GM12878 (cell line): ENCODE measurements at regions of chr17 and their contacts with region 1.

Region 1: DNA sequence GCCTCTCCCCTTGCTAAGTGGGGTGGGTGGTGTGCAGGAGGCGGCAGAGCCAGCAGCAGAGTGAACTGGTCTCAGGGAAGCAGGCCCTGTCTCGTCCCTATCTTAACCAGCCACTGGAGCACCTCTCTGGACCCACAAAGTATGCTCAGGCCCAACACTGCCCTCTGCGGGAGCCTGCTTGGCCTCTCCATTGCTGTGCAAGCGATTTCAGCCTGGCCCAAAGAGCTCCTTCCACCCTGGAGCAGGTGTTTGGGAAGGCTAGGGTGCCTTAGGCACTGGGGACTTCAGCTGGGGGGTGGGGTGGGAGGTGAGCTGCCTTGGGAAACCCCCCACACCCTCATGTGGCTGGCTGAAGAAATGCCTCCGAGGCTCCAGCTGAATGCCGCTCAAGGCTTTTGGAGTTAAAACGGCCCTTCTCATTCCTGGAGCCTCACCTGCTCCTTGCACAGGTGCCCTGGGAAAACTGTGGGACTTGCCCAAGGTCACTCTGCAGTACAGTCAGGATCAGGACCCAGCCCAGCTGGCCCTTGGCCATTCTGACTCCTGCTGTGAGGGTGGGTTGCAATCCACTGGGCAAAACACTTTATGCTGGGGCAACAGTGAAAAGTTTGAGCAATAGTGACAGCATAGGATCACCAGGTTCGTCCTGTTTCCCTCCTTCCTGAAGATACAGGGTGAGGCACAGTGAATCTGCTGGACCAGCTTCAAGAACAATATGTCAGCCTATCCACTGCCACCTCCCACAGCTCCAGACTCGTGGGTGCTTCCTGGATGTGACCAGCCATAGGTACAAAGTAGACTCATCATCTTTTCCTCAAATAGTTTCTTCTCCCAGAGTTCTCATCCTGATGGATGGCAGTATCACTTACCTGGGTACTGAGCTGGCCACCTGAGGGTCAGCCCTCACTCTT is 5.9 kb upstream of the UBE2O start:
- DNase-seq: no peak
- ATAC-seq: peak; percentile 96
- H3K4me3 ChIP-seq: no peak overlapping the region
- H3K27ac ChIP-seq: no peak overlapping the region
- H3K4me1 ChIP-seq: no peaks in the 10 kb centered on the region
- H3K27me3 ChIP-seq: no peaks in the 10 kb centered on the region
- CTCF ChIP-seq: peak; percentile 67 to 79 (median 75)
- EP300 ChIP-seq: no peak
- POLR2A ChIP-seq: no peak
- RAD21 ChIP-seq: peak; percentile 74

Region 2: DNA sequence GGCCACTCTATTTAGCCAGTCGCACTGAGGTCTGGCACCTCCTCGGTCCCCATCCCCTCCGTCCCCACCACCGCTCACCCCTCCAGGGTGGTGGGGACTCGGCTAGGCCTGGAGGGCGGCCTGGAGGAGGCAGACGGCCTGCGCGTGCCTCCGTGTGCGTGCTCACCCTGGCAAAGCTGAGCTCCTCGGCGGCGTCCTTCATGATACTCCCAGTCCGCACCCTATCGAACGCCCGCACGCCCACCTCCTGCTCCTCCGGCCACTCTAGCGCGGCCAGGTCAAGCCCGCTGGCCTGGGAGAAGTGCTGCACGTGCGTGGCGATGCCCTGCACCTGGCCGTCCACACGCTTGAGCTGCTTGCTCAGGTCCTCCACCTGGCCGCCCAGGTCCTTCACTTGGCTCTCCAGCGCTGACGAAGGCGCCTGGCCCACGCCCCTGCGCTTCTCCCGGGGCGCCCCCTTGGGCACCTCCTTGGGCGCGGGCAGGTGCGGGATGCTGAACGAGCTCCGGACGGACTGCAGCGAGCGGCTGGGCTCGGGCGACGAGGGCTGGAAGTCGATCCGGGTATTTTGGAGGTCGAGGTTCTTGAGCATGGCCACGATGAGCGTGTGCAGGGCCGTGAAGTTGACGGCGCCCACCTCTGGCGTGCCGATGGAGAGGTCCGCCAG is 151.4 kb before region 1 on chr17:
- CTCF ChIA-PET with region 1: interaction called, 15 read pairs
- POLR2A ChIA-PET with region 1: no interaction called
- RAD21 ChIA-PET with region 1: interaction called, 7 read pairs
- SMC1A ChIA-PET with region 1: interaction called, 9 read pairs
- in situ Hi-C with region 1: no loop called
- intact Hi-C with region 1: no loop called
- DNase-seq: no peak
- ATAC-seq: no peak
- H3K4me3 ChIP-seq: no peak overlapping the region
- H3K27ac ChIP-seq: no peak overlapping the region
- H3K4me1 ChIP-seq: no peaks in the 10 kb centered on the region
- H3K27me3 ChIP-seq: no peaks in the 10 kb centered on the region
- CTCF ChIP-seq: no peak
- EP300 ChIP-seq: no peak
- POLR2A ChIP-seq: no peak
- RAD21 ChIP-seq: no peak

Region 3: GRCh38 chr17:76397687-76398487 is 60.9 kb before region 1 on chr17:
- CTCF ChIA-PET with region 1: interaction called, 28 read pairs
- POLR2A ChIA-PET with region 1: no interaction called
- RAD21 ChIA-PET with region 1: interaction called, 14 read pairs
- SMC1A ChIA-PET with region 1: interaction called, 19 read pairs
- in situ Hi-C with region 1: no loop called
- intact Hi-C with region 1: no loop called
- DNase-seq: peak; percentile 30
- ATAC-seq: peak; percentile 98
- H3K4me3 ChIP-seq: no peak overlapping the region
- H3K27ac ChIP-seq: no peak overlapping the region
- H3K4me1 ChIP-seq: no peaks in the 10 kb centered on the region
- H3K27me3 ChIP-seq: no peaks in the 10 kb centered on the region
- CTCF ChIP-seq: peak; percentile 96 to 98 (median 96); a peak in 5 of 6 replicates
- EP300 ChIP-seq: no peak
- POLR2A ChIP-seq: no peak; the same call in 1 of the 2 replicates
- RAD21 ChIP-seq: peak; percentile 76

Region 4: GRCh38 chr17:76414334-76415295 is 44.2 kb before region 1 on chr17:
- CTCF ChIA-PET with region 1: interaction called, 142 read pairs
- POLR2A ChIA-PET with region 1: interaction called, 3 read pairs
- RAD21 ChIA-PET with region 1: interaction called, 55 read pairs
- SMC1A ChIA-PET with region 1: interaction called, 10 read pairs
- in situ Hi-C with region 1: no loop called
- intact Hi-C with region 1: no loop called
- DNase-seq: no peak
- ATAC-seq: no peak
- H3K4me3 ChIP-seq: no peak overlapping the region
- H3K27ac ChIP-seq: no peak overlapping the region
- H3K4me1 ChIP-seq: peaks cover 7% of the 10 kb centered on the region
- H3K27me3 ChIP-seq: no peaks in the 10 kb centered on the region
- CTCF ChIP-seq: no peak
- EP300 ChIP-seq: no peak
- POLR2A ChIP-seq: no peak
- RAD21 ChIP-seq: no peak

Region 5: DNA sequence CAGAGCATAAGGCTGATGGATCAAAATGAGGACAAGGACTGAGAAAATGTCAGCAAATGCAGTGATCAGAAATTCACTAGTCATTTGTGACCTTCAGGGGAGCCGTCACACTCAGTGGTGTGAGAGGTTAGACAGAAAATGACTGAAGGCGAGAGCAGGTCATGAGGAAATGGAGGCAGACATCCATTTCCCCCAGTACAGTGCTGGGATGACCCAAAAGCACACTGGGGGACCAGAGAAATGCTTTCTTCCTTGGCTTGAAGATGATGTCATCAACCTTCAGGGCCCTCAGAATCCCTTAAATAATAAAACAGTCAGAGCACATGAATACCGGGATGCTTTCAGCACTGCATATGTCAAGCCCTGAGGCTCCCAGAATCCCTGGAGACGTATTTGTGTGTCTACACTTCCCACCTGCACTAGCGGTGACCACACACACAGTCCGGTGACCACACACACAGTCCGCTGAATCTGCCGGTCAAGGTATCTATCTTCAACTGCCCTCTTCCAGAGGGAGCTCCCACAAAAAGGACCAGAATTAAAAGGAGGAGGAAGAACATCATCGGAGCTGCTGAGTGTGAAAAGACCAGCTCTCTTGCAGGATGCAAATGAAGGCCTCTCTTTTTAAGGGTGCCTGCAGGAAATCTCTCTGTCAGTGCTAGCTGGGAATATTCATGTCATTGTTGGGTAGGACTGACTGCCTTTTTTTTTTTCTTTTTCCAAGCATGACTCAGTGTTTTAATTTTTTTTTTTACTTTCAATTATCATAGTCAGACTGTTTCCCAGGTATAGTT is 14.1 kb before region 1 on chr17:
- CTCF ChIA-PET with region 1: interaction called, 19 read pairs
- POLR2A ChIA-PET with region 1: interaction called, 4 read pairs
- RAD21 ChIA-PET with region 1: interaction called, 8 read pairs
- SMC1A ChIA-PET with region 1: interaction called, 14 read pairs
- in situ Hi-C with region 1: no loop called
- intact Hi-C with region 1: no loop called
- DNase-seq: no peak
- ATAC-seq: peak; percentile 59
- H3K4me3 ChIP-seq: peak overlapping the region; percentile 44; the same call in 1 of the 2 replicates
- H3K27ac ChIP-seq: peak overlapping the region; percentile 61
- H3K4me1 ChIP-seq: peaks cover 65% of the 10 kb centered on the region
- H3K27me3 ChIP-seq: no peaks in the 10 kb centered on the region
- CTCF ChIP-seq: no peak
- EP300 ChIP-seq: no peak
- POLR2A ChIP-seq: no peak
- RAD21 ChIP-seq: no peak

Region 6: GRCh38 chr17:76506408-76507349 is 47.8 kb after region 1 on chr17:
- CTCF ChIA-PET with region 1: interaction called, 186 read pairs
- POLR2A ChIA-PET with region 1: interaction called, 6 read pairs
- RAD21 ChIA-PET with region 1: interaction called, 13 read pairs
- SMC1A ChIA-PET with region 1: interaction called, 31 read pairs
- in situ Hi-C with region 1: no loop called
- intact Hi-C with region 1: no loop called
- DNase-seq: peak; percentile 40
- ATAC-seq: peak; percentile 92
- H3K4me3 ChIP-seq: no peak overlapping the region
- H3K27ac ChIP-seq: no peak overlapping the region
- H3K4me1 ChIP-seq: peaks cover 9% of the 10 kb centered on the region
- H3K27me3 ChIP-seq: no peaks in the 10 kb centered on the region; a peak in 1 of 4 replicates
- CTCF ChIP-seq: peak; percentile 89 to 99 (median 92); a peak in 5 of 6 replicates
- EP300 ChIP-seq: no peak
- POLR2A ChIP-seq: no peak
- RAD21 ChIP-seq: peak; percentile 97